ENCODE measurements at regions of chr2 and their contacts with region 1.

Region 1: DNA sequence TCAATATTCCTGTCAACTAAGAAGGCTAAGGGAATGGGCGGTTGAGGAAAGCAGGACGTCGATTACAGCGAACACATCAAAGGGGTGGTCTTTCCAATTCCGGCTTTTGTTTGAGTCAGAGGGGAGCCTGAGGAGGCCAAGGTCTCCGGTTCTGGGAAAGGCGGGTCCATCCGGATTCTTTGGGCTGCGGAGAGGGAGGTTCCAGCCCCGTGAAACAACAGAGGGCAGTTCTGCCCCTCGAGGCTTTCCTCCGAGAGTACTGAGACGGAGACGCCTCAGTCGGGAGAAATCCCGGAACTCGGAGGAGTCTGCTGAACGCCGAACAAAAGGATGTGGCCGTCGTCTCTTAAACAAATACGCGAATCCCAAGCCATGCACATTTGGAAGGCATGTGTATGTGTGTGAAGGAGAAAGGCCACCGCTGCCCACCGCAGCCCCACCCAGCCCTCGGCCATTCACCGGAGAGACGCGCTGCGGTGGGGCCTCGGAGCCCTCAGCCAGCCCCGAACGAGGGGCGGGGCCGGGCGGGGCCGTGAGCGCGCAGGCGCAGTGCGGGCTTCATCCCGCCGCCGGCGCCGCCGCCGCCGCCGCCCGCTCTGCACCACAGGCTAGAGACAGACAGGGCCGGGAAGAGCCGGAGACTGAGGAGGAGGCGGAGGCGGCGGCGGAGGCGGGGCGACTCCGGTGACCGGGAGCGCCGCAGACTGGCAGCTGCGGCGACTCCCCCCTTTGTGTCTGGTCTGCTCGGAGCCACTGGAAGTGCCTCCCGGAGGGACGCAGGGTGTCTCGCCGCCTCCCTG is at the start of gene BMPR2:
- DNase-seq: peak; percentile 94
- H3K4me3 ChIP-seq: peak within 1 kb of the TSS; percentile 95 to 99 (median 97)
- H3K27ac ChIP-seq: peak within 1 kb of the TSS; percentile 99
- H3K4me1 ChIP-seq: peaks cover 18% of the 10 kb centered on the region
- H3K27me3 ChIP-seq: no peaks in the 10 kb centered on the region
- CTCF ChIP-seq: no peak
- POLR2A ChIP-seq: peak; percentile 97
- total RNA-seq, gene BMPR2: 113 and 115 TPM in 2 replicates

Region 2: GRCh38 chr2:202278944-202279343 is 96.9 kb before region 1 on chr2:
- CTCF ChIA-PET with region 1: interaction called, 26 read pairs
- POLR2A ChIA-PET with region 1: no interaction called
- dilution Hi-C with region 1: no loop called
- intact Hi-C with region 1: loop called (anchors 1 kb)
- DNase-seq: peak; percentile 88
- H3K4me3 ChIP-seq: peak overlapping the region in 1 of 3 experiments; percentile 12
- H3K27ac ChIP-seq: peak overlapping the region; percentile 88
- H3K4me1 ChIP-seq: peaks cover 24% of the 10 kb centered on the region
- H3K27me3 ChIP-seq: no peaks in the 10 kb centered on the region
- CTCF ChIP-seq: peak; percentile 41 to 61
- POLR2A ChIP-seq: no peak

Region 3: GRCh38 chr2:202317080-202317857 is 58.5 kb before region 1 on chr2:
- CTCF ChIA-PET with region 1: interaction called, 3 read pairs
- POLR2A ChIA-PET with region 1: no interaction called
- dilution Hi-C with region 1: no loop called
- intact Hi-C with region 1: loop called (anchors 1 kb)
- DNase-seq: peak; percentile 99
- H3K4me3 ChIP-seq: peak overlapping the region in 1 of 3 experiments; percentile 14
- H3K27ac ChIP-seq: peak overlapping the region; percentile 83
- H3K4me1 ChIP-seq: peaks cover 29% of the 10 kb centered on the region
- H3K27me3 ChIP-seq: no peaks in the 10 kb centered on the region
- CTCF ChIP-seq: no peak
- POLR2A ChIP-seq: peak; percentile 36

Region 4: DNA sequence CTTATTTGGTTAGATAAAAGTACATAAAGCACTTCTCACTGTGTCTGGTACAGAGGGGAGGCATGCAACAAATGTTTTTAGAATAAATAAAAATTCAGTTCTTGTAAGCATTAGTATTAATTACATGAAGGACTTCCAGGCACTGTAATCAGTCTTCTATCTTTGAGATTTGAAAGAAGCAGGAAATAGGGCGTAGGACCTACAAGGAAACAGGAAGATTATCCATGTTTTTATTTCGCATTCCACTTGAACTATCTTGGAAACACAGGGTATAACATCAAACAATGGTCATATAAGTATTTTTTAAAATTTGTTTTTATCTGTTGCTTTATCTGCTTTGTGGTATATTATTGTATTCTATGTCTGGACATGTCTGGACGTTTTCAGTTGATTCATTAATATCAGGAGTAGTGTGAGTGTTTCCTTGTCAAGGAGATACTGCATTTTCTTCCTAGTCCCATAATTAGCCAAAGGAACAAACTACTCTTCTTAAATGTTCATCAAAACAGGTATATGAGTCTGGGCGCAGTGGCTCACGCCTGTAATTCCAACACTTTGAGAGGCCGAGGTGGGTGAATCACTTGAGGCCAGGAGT is 32.8 kb after region 1 on chr2:
- CTCF ChIA-PET with region 1: interaction called, 3 read pairs
- POLR2A ChIA-PET with region 1: no interaction called
- dilution Hi-C with region 1: no loop called
- intact Hi-C with region 1: loop called (anchors 1 kb)
- DNase-seq: peak; percentile 87
- H3K4me3 ChIP-seq: no peak overlapping the region
- H3K27ac ChIP-seq: peak overlapping the region; percentile 80
- H3K4me1 ChIP-seq: peaks cover 68% of the 10 kb centered on the region
- H3K27me3 ChIP-seq: no peaks in the 10 kb centered on the region
- CTCF ChIP-seq: no peak
- POLR2A ChIP-seq: peak; percentile 79

Region 5: DNA sequence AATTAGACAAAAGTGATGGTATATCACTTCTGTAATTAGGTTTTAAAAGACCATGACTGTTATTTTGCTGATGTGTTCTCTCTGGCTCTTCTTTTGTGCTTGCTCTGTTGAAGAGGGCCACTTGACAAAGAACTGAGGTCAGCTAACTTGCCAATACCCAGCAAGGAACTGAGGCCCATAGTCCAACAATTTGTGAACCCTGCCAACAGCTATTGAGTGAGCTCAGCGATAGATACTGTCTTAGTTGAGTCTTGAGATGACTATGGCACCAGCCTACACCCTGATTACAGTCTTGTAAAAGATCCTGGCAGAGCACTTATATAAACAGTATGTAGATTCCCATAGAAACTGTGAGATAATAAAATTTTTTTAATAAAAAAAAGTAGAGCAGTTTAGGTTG is 103.3 kb after region 1 on chr2:
- CTCF ChIA-PET with region 1: no interaction called
- POLR2A ChIA-PET with region 1: no interaction called
- dilution Hi-C with region 1: no loop called
- intact Hi-C with region 1: loop called (anchors 5 kb)
- DNase-seq: no peak
- H3K4me3 ChIP-seq: no peak overlapping the region
- H3K27ac ChIP-seq: no peak overlapping the region
- H3K4me1 ChIP-seq: no peaks in the 10 kb centered on the region
- H3K27me3 ChIP-seq: no peaks in the 10 kb centered on the region
- CTCF ChIP-seq: no peak
- POLR2A ChIP-seq: no peak